ENCODE measurements at regions of chr5 and their contacts with region 1.

Region 1: DNA sequence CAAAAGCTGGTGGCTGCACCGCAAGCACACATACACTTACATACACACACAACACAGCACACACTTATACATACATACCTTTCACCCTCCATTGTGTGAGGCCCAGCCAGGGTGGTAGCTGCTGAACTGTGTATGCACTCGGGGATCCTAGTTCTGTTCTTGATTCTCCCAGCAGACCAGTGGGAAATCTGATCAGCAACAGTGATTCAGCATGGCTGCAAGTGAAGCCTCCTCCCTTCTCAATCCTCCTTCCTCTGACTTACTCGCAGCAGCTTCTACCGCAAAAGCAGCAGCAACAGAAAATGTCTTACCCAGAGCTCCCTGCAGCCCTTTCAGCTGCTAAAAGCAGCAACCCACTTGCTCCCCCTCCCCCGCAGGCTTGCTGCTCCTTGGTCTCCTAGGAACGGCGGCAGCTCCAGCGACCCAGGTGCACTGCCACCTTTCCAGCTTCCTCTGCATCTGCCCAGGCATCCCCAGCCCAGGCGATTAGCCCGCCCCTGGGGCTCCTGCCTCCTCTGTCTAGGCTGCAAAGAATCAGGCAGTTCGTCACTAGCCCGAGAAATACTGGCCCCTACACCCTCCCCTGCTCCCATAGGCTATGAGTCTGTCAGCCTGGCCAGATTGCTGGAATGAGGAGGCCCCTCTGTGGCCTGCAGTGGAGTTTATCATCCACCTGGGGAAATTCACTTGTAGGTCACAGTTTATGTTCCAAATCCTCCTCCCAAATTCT is at the start of gene KLHL3:
- DNase-seq: peak in 4 of 5 donors; percentile 26 to 39 (median 28)
- H3K4me3 ChIP-seq: peak within 1 kb of the TSS; percentile 61 to 73
- H3K4me3 Mint-ChIP-seq: no peak within 1 kb of the TSS
- H3K27ac ChIP-seq: peak within 1 kb of the TSS; percentile 36
- H3K27ac Mint-ChIP-seq: no peak within 1 kb of the TSS
- H3K4me1 ChIP-seq: peaks cover 68% of the 10 kb centered on the region
- H3K4me1 Mint-ChIP-seq: peaks cover 13 to 20% (median 14%) of the 10 kb centered on the region in 4 donors
- H3K27me3 ChIP-seq: no peaks in the 10 kb centered on the region
- H3K27me3 Mint-ChIP-seq: no peaks in the 10 kb centered on the region
- total RNA-seq, gene KLHL3: 22.0 to 25.9 TPM

Region 2: DNA sequence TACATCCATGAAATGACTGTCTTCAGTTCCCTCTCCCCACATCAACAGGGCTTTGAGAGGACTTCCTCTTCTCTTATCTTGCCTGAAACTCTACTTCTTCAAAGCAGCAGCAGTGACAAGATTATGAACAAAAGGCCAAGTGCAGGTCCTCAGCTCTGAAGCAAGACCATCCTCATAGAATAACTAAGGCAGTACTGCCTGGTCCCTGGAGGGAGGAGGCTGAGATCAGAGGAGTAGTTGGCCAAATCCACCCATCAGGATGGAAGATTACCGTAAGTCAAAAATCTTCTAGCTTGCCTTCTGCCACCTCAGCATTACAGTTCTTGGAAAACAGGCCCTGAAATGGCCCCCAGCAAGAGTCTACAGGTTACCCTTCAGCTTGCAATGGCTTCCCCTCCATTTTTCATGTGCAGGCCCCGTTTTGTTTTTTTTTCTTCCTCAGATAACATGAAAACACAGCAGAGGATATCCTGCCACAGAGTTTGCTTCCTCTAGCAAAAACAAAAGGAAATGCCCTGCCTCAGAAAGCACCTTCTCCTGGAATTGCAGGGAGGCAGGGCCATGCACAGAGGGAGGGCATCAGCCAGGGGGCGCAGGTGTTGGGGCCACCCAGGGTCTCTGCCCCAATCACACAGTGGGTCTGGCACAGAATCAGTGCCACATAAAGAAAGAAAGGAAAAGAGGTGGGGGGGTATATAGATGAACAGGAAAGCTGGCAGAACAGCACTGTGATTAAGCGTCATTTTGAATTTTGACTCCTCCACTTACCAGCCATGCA is 39.9 kb before region 1 on chr5:
- CTCF ChIA-PET with region 1: interaction called, 186 read pairs
- POLR2A ChIA-PET with region 1: interaction called, 48 read pairs
- intact Hi-C with region 1: loop called (anchors 1 kb)
- DNase-seq: peak; percentile 42 to 66 (median 52)
- H3K4me3 ChIP-seq: peak overlapping the region in 1 of 2 donors; percentile 9
- H3K4me3 Mint-ChIP-seq: peak overlapping the region; percentile 69 to 89 (median 81)
- H3K27ac ChIP-seq: peak overlapping the region; percentile 4
- H3K27ac Mint-ChIP-seq: peak overlapping the region; percentile 86 to 96 (median 92)
- H3K4me1 ChIP-seq: peaks cover 47% of the 10 kb centered on the region
- H3K4me1 Mint-ChIP-seq: peaks cover 34 to 68% (median 56%) of the 10 kb centered on the region in 4 donors
- H3K27me3 ChIP-seq: no peaks in the 10 kb centered on the region
- H3K27me3 Mint-ChIP-seq: no peaks in the 10 kb centered on the region

Region 3: GRCh38 chr5:137778772-137779564 is 43.2 kb after region 1 on chr5:
- CTCF ChIA-PET with region 1: no interaction called
- POLR2A ChIA-PET with region 1: no interaction called
- intact Hi-C with region 1: no loop called
- DNase-seq: peak in 4 of 5 donors; percentile 8 to 23 (median 18)
- H3K4me3 ChIP-seq: no peak overlapping the region
- H3K4me3 Mint-ChIP-seq: no peak overlapping the region
- H3K27ac ChIP-seq: no peak overlapping the region
- H3K27ac Mint-ChIP-seq: no peak overlapping the region
- H3K4me1 ChIP-seq: no peaks in the 10 kb centered on the region
- H3K4me1 Mint-ChIP-seq: no peaks in the 10 kb centered on the region
- H3K27me3 ChIP-seq: no peaks in the 10 kb centered on the region
- H3K27me3 Mint-ChIP-seq: peaks cover 4 to 5% of the 10 kb centered on the region in 2 donors

Measured in CD4-positive, alpha-beta memory T cell (primary cell).